AG04450 (cell line): ENCODE measurements at regions of chr18 and their contacts with region 1.

Region 1: GRCh38 chr18:11937874-11938478 is 29.9 kb upstream of the MPPE1 start:
- DNase-seq: no peak
- H3K4me3 ChIP-seq: no peak overlapping the region
- H3K27ac ChIP-seq: no peak overlapping the region
- H3K27me3 ChIP-seq: no peaks in the 10 kb centered on the region
- CTCF ChIP-seq: peak; percentile 83

Region 2: DNA sequence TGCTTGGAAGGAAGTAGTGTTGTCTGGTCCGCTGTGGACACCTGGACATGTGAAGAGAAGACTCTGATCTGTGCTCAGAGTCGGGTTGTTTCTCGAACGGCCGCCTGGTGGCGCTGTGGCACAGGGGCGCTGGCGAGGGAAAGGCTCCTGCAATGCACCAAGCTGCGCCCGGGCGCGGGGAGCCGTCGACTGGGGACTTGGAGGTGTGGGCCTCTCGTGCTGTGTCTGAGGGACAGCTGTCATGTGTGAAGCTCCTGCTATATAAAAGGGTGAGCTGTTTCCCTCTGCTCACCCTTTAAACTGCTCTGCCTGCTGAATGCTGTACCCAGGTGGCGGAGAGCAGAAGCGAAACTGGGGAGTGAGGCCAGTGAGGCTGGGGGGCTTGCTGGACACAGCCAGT is 204.9 kb before region 1 on chr18:
- CTCF ChIA-PET with region 1: interaction called, 19 read pairs
- POLR2A ChIA-PET with region 1: no interaction called
- DNase-seq: peak; percentile 15
- H3K4me3 ChIP-seq: peak overlapping the region; percentile 43
- H3K27ac ChIP-seq: no peak overlapping the region
- H3K27me3 ChIP-seq: peaks cover 19% of the 10 kb centered on the region
- CTCF ChIP-seq: peak; percentile 90

Region 3: GRCh38 chr18:11955239-11956029 is 17.5 kb after region 1 on chr18:
- CTCF ChIA-PET with region 1: interaction called, 33 read pairs
- POLR2A ChIA-PET with region 1: no interaction called
- DNase-seq: peak; percentile 67
- H3K4me3 ChIP-seq: no peak overlapping the region
- H3K27ac ChIP-seq: peak overlapping the region; percentile 75
- H3K27me3 ChIP-seq: no peaks in the 10 kb centered on the region
- CTCF ChIP-seq: no peak

Region 4: GRCh38 chr18:11989973-11990380 is 52.0 kb after region 1 on chr18:
- CTCF ChIA-PET with region 1: interaction called, 342 read pairs
- POLR2A ChIA-PET with region 1: interaction called, 3 read pairs
- DNase-seq: no peak
- H3K4me3 ChIP-seq: no peak overlapping the region
- H3K27ac ChIP-seq: no peak overlapping the region
- H3K27me3 ChIP-seq: no peaks in the 10 kb centered on the region
- CTCF ChIP-seq: no peak

Region 5: GRCh38 chr18:12018861-12019260 is 80.9 kb after region 1 on chr18:
- CTCF ChIA-PET with region 1: interaction called, 11 read pairs
- POLR2A ChIA-PET with region 1: interaction called, 3 read pairs
- DNase-seq: no peak
- H3K4me3 ChIP-seq: no peak overlapping the region
- H3K27ac ChIP-seq: no peak overlapping the region
- H3K27me3 ChIP-seq: no peaks in the 10 kb centered on the region
- CTCF ChIP-seq: no peak